ENCODE measurements at regions of chr6 and their contacts with region 1.

Region 1: DNA sequence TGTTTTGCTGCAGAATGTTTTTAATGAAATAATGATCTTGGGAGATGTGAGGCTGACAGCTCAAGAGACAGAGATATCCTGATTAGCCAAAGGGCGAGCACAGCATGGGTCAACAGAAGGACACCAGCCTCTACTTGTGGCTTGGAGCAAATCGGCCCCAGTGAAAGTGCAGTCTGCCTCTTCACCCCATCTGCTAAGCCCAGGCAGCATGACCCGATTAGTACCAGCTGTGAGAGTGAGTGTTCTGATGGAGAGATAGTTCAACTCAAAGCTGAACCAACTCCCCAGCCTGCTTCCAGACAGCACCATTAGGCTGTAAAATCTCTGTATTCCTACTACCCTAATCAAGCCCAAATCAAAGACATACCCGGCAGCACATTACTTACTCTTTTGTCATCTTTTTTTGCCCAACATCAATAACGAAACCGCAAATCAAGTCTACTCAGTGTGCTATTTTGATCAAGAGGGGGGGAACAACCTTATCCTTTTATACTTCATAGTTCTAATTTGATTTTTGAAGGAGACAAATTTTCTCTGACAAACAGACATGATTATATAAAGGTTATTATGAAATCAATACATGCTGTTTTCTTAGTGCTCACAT is 514.1 kb upstream of the NRSN1 start:
- DNase-seq: no peak
- H3K4me3 ChIP-seq: no peak overlapping the region
- H3K27ac ChIP-seq: no peak overlapping the region
- H3K4me1 ChIP-seq: no peaks in the 10 kb centered on the region
- H3K27me3 ChIP-seq: no peaks in the 10 kb centered on the region
- CTCF ChIP-seq: no peak
- POLR2A ChIP-seq: no peak

Region 2: DNA sequence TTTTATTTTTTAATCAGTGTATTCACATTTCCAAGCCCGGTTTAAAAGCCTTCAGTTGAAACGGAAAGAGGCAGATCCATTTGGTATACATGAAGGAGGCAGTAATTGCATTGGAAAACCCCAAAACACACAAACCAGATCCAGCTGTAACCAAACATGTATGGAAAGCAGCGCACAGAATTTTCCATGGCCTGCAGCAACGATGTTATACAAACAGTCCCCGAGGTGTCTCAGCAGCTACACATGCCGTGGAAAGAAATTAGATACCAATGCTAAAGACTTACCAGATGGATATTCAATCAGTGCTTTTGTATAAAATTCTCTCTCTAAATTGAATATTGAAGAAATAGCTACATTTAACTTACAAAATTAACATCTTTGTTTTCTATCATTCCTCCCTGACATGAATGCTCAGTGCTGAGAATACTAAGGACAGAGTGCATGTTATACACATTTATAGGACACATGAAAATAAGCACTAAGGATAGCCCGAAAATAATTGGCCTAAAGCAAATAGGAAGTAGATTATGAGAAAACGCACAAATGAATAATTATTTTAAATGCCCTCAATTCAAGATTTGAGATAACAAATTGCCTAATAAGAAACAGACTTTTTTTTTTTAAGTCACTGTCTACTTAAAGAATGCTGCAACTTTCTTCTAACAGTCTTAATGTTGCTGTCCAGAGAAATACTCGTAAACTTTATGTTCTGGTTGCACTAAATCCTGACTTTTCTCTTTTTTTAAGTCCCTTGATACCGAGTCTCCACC is 329.4 kb before region 1 on chr6:
- intact Hi-C with region 1: no loop called
- DNase-seq: no peak
- H3K4me3 ChIP-seq: no peak overlapping the region
- H3K27ac ChIP-seq: no peak overlapping the region
- H3K4me1 ChIP-seq: no peaks in the 10 kb centered on the region
- H3K27me3 ChIP-seq: no peaks in the 10 kb centered on the region
- CTCF ChIP-seq: no peak
- POLR2A ChIP-seq: no peak

Region 3: GRCh38 chr6:23547701-23548161 is 64.1 kb before region 1 on chr6:
- intact Hi-C with region 1: loop called (anchors 2 kb)
- DNase-seq: no peak
- H3K4me3 ChIP-seq: no peak overlapping the region
- H3K27ac ChIP-seq: no peak overlapping the region
- H3K4me1 ChIP-seq: no peaks in the 10 kb centered on the region
- H3K27me3 ChIP-seq: no peaks in the 10 kb centered on the region
- CTCF ChIP-seq: peak in 1 of 3 donors; percentile 29
- POLR2A ChIP-seq: no peak

Region 4: DNA sequence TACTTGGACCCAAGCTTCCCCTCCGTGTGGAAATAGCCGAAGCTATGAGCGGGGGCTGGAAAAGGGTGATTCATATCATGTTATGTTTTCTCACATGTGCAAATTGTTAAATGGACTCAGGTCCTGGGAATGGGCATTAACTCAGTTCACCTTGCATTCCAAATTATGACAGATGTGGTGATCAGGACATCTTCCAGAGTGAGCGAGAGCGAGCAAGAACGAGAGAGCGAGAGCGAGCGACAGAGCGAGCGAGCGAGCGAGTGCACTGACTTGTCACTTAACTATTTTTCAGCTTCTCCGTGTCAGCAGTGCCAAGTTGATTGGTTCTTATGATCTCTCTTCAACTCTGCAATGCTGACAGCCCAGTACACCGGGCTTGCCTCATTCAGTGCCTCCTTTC is 76.8 kb after region 1 on chr6:
- intact Hi-C with region 1: no loop called
- DNase-seq: no peak
- H3K4me3 ChIP-seq: peak overlapping the region in 1 of 3 donors; percentile 30
- H3K27ac ChIP-seq: no peak overlapping the region
- H3K4me1 ChIP-seq: no peaks in the 10 kb centered on the region
- H3K27me3 ChIP-seq: no peaks in the 10 kb centered on the region
- CTCF ChIP-seq: no peak
- POLR2A ChIP-seq: no peak

Region 5: GRCh38 chr6:23957017-23957416 is 345.1 kb after region 1 on chr6:
- intact Hi-C with region 1: loop called (anchors 5 kb)
- DNase-seq: no peak
- H3K4me3 ChIP-seq: no peak overlapping the region
- H3K27ac ChIP-seq: no peak overlapping the region
- H3K4me1 ChIP-seq: no peaks in the 10 kb centered on the region
- H3K27me3 ChIP-seq: no peaks in the 10 kb centered on the region
- CTCF ChIP-seq: no peak
- POLR2A ChIP-seq: no peak